ENCODE measurements at regions of chr20 and their contacts with region 1.

Region 1: DNA sequence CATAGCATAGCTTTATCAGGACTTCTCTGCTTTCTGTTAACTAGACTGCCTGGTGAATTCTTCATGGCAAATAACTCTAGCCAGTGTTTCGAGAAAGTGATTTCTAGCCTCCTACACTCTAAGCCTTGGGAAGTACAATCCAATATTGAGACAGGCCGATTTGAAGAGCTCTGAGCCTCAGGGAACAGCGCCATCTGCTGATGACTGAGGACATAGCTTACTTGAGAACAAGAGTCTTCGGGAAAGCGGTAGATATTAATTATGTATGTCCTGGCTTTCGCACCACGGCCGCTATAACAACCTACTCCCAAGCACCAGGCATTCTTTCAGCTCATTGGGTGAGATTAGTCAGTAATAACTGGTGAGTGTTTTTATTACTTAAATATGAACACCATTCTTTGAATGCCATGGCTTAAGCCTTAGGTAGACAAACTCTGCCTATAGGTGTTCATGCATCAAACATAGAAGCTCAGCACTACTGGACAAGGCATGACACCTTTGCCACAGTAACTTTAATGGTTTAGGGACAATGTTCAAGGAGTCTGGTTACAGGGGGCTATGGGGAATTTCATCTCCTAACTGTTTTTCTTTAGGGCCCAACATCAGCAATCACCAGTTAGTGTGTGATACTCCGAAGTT is 518.6 kb downstream of the BMP2 start:
- DNase-seq: peak; percentile 18
- CTCF ChIP-seq: peak; percentile 80

Region 2: DNA sequence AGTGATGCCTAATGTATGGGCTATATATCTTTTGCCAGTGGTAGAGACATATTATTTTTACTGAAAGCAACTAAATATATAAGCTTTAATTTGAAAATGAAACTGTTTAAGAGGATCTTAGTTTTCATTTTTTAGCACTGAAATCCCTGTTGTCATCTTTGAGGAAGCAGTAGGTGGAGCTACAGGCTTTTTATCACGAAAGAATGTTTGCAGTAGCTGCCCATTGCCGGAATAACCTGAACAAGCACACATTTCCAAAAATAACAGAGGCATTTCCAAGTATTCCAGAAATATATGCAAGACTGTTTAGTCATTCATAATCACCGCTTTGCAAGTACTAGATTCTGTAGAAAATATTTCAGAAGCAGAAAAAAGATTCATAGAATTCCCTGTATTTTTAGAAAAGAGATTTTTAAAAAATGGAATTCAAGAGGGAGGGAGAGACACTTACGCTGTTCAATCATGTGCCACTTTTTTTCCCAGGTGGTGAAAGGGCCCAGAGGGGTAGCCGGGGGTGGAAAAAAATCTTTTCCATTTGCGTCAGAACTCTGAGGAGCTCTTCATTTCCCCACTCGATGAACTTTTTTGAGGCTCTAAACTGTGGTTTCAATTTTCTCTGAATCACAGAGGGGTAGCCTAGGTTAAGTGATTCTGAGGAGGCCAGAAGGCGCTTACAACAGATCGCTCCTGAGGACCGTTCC is 1020.7 kb before region 1 on chr20:
- CTCF ChIA-PET with region 1: interaction called, 15 read pairs
- POLR2A ChIA-PET with region 1: no interaction called
- DNase-seq: peak; percentile 19
- CTCF ChIP-seq: peak; percentile 27

Region 3: GRCh38 chr20:7248281-7249201 is 37.5 kb before region 1 on chr20:
- CTCF ChIA-PET with region 1: interaction called, 10 read pairs
- POLR2A ChIA-PET with region 1: no interaction called
- DNase-seq: no peak
- CTCF ChIP-seq: no peak

Region 4: DNA sequence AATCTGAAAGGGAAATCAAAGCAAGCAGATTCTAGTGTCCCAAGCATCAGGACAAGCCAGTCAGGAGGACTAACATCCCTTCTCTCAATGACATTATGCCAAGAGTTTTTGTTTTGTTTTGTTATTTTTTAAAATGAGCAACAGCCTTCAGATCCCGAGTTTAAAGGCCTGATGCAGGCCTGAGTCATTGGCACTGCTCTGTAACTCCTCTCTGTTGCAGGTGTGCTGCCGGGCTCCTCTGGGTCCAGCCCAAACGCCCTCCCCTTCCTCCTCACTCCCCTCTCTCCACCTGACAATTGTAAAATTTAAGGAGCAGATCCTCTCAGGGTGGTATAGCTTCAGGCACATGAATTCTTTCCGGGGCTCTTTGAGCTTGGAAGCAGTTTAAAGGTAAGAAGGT is 16.6 kb before region 1 on chr20:
- CTCF ChIA-PET with region 1: interaction called, 12 read pairs
- POLR2A ChIA-PET with region 1: no interaction called
- DNase-seq: no peak
- CTCF ChIP-seq: no peak

Region 5: DNA sequence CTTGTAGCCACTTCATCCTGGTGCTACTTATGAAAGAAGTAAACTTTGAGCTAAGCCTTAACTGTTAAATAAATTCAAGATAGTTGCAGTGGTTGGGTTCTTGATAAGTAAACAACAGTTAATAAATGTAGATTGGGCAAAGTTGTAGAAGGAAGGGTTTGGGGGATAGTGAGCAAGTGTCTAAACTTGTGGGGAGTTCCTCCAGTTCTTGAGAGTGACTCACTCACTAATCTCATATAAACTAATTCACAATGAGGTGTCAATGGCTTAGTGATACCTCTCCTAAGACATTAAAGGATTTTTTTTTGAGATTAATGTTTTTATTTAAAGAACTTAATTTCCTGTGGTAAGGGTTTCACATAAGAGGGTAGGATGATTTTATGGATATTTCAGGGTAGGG is 11.2 kb before region 1 on chr20:
- CTCF ChIA-PET with region 1: interaction called, 12 read pairs
- POLR2A ChIA-PET with region 1: no interaction called
- DNase-seq: no peak
- CTCF ChIP-seq: no peak

Region 6: GRCh38 chr20:7346562-7346961 is 60.5 kb after region 1 on chr20:
- CTCF ChIA-PET with region 1: no interaction called
- POLR2A ChIA-PET with region 1: no interaction called
- DNase-seq: no peak
- CTCF ChIP-seq: no peak

Measured in GM10248 (cell line).